GM23248 (cell line): ENCODE measurements at regions of chr17 and their contacts with region 1.

Region 1: DNA sequence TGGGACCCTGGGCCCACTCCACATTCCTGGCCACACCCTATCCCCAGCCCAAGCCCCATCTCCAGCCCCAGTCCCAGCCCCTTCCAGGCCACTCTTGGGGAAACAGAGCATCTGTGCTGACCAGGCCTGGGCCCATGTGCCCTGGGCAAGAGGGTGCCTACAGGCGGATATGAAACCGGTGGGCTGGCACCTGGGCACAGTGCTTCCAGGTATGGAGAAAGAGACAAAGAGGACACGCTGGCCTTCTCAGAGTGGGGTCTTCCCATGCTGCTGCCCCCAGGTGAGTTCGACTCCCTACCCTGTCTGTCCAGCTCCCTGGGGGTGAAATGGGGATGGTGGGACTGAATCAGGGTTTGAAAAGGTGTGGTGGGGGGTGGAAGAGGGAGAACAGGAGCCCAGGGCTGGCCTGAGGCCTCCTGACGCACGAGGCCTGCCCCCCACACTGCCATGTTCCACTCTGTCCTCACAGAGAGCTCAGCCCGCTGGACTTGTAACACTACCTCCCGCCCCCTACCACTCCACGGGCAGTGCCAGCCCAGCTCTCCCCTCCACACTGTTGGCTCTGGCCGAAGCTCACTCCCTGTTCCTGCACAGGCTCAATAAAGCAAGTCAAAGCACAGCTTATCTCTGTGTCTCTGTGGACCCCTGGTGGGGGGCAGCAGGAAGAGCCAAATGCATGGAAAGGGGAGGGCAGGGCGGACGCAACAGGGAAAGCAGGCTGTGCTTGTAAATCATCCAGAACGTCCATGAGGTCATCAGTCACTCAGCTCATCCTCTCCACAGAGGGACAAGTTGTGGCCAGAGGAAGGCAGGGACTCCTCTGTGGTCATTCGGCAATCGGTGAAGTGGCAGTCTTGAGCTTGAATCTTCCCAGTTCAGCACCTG is 71.1 kb upstream of the TMEM97 start:
- DNase-seq: no peak
- H3K4me3 ChIP-seq: no peak overlapping the region
- H3K27ac ChIP-seq: no peak overlapping the region
- H3K4me1 ChIP-seq: peaks cover 12% of the 10 kb centered on the region
- H3K27me3 ChIP-seq: no peaks in the 10 kb centered on the region

Region 2: GRCh38 chr17:28334666-28335200 is 86.8 kb after region 1 on chr17:
- in situ Hi-C with region 1: loop called (anchors 5 kb)
- DNase-seq: peak; percentile 81
- H3K4me3 ChIP-seq: peak overlapping the region; percentile 86
- H3K27ac ChIP-seq: peak overlapping the region; percentile 97
- H3K4me1 ChIP-seq: peaks cover 41% of the 10 kb centered on the region
- H3K27me3 ChIP-seq: no peaks in the 10 kb centered on the region

Region 3: DNA sequence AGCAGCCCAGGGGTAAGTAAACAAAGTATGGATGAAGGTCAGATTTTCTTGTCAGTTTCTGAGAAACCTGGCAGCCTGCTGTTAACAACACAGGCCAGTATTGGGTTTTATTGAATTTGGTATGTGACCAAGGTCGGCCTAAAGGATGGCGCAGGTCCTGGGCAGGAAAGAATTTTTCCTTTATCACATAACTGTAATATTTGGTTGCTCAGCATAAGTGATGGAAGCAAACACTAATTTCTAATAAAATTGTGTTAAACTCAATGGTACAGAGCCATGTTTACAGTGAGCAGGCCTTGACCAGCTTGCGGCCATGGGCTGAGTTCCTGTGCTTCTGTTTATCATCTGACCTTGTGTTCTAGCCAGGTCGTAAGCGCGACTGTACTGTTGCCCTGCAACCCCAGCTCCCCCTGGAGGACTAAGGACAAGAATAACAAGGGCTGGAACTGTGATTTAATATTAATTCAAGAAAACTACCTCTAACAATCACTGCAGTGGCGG is 98.9 kb after region 1 on chr17:
- in situ Hi-C with region 1: no loop called
- DNase-seq: no peak
- H3K4me3 ChIP-seq: no peak overlapping the region
- H3K27ac ChIP-seq: peak overlapping the region; percentile 73
- H3K4me1 ChIP-seq: peaks cover 24% of the 10 kb centered on the region
- H3K27me3 ChIP-seq: no peaks in the 10 kb centered on the region